ENCODE measurements at regions of chr2 and their contacts with region 1.

Region 1: DNA sequence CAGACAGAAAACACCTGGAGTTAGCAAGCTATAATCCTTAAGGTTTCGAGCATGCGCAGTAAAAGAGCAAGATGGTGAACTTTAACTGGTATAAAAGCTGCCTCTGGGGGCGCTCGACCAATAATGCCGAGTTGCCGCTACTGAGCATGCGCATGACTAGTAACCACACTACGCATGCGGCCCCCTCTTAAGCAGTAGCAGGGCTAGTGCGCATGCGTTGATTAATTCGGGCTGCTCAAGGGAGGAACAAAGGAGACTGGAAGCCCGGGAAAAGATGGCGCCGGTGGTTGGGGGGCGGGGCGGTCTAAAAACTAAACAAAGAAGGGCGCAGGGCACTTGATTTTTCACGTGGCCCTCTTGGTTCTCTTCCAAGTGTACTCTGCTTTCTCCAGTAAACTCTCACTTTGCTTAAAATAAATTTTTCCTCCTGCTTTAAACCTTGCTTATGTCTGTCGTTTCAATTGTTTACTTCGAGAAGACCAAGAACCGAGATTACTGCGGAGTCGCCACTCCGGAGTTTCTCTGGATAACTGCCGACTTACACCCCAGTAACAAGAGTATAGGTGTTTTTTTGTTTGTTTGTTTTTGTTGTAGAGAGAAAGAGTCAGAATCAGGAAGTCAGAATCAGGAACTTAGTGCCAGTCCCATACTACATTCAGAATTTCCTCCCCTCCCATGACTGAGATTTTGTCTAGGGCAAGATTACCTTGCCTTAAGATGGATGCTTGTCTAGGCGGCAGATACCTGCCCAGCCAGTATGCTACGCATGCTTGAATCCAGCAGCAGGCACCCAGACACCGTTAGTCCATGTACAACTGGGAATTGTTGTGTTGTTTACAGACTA is 5.8 kb downstream of the XRCC5 start:
- DNase-seq: peak; percentile 94 to 99
- H3K4me3 ChIP-seq: peak overlapping the region; percentile 52 to 62
- H3K27ac ChIP-seq: peak overlapping the region; percentile 55 to 70
- H3K4me1 ChIP-seq: peaks cover 3 to 20% of the 10 kb centered on the region in 2 donors
- H3K27me3 ChIP-seq: no peaks in the 10 kb centered on the region
- CTCF ChIP-seq: peak; percentile 80 to 90 (median 86)

Region 2: GRCh38 chr2:215311625-215312396 is 803.1 kb before region 1 on chr2 and contains the start of gene ATIC:
- intact Hi-C with region 1: loop called (anchors 10 kb)
- DNase-seq: peak; percentile 73 to 97
- H3K4me3 ChIP-seq: peak within 1 kb of the TSS; percentile 85 to 86
- H3K27ac ChIP-seq: peak within 1 kb of the TSS; percentile 73 to 87
- H3K4me1 ChIP-seq: peaks cover 0 to 6% of the 10 kb centered on the region in 2 donors
- H3K27me3 ChIP-seq: no peaks in the 10 kb centered on the region
- CTCF ChIP-seq: peak in 1 of 3 experiments; percentile 19
- total RNA-seq, gene ATIC: 8.9 TPM

Region 3: GRCh38 chr2:216412022-216412999 is 297.4 kb after region 1 on chr2 and contains the start of gene SMARCAL1:
- intact Hi-C with region 1: loop called (anchors 5 kb)
- DNase-seq: peak; percentile 96 to 99
- H3K4me3 ChIP-seq: peak within 1 kb of the TSS; percentile 79 to 89
- H3K27ac ChIP-seq: peak within 1 kb of the TSS; percentile 89 to 92
- H3K4me1 ChIP-seq: no peaks in the 10 kb centered on the region
- H3K27me3 ChIP-seq: no peaks in the 10 kb centered on the region
- CTCF ChIP-seq: no peak
- total RNA-seq, gene SMARCAL1: 5.3 TPM

Measured in ascending aorta (tissue), 2 donors.